ENCODE measurements at regions of chr10 and their contacts with region 1.

Region 1: GRCh38 chr10:45235798-45236231 is 79.6 kb downstream of the OR13A1 start:
- DNase-seq: no peak
- ATAC-seq: no peak
- H3K4me3 ChIP-seq: no peak overlapping the region
- H3K4me3 Mint-ChIP-seq: no peak overlapping the region
- H3K27ac ChIP-seq: no peak overlapping the region
- H3K27ac Mint-ChIP-seq: no peak overlapping the region
- H3K4me1 ChIP-seq: no peaks in the 10 kb centered on the region
- H3K4me1 Mint-ChIP-seq: peaks cover 6% of the 10 kb centered on the region
- H3K27me3 ChIP-seq: no peaks in the 10 kb centered on the region
- H3K27me3 Mint-ChIP-seq: peaks cover 4% of the 10 kb centered on the region
- CTCF ChIP-seq: no peak

Region 2: GRCh38 chr10:43574001-43574892 is 1661.6 kb before region 1 on chr10 and contains the start of gene ZNF239:
- CTCF ChIA-PET with region 1: no interaction called
- POLR2A ChIA-PET with region 1: no interaction called
- intact Hi-C with region 1: no loop called
- DNase-seq: peak; percentile 62 to 93 (median 82)
- ATAC-seq: peak; percentile 88
- H3K4me3 ChIP-seq: peak within 1 kb of the TSS; percentile 43 to 63
- H3K4me3 Mint-ChIP-seq: peak within 1 kb of the TSS; percentile 85
- H3K27ac ChIP-seq: peak within 1 kb of the TSS; percentile 38 to 66
- H3K27ac Mint-ChIP-seq: peak within 1 kb of the TSS; percentile 90
- H3K4me1 ChIP-seq: peaks cover 25% of the 10 kb centered on the region
- H3K4me1 Mint-ChIP-seq: peaks cover 51% of the 10 kb centered on the region
- H3K27me3 ChIP-seq: no peaks in the 10 kb centered on the region
- H3K27me3 Mint-ChIP-seq: no peaks in the 10 kb centered on the region
- CTCF ChIP-seq: no peak
- total RNA-seq, gene ZNF239: 0.75 to 1.1 TPM

Region 3: DNA sequence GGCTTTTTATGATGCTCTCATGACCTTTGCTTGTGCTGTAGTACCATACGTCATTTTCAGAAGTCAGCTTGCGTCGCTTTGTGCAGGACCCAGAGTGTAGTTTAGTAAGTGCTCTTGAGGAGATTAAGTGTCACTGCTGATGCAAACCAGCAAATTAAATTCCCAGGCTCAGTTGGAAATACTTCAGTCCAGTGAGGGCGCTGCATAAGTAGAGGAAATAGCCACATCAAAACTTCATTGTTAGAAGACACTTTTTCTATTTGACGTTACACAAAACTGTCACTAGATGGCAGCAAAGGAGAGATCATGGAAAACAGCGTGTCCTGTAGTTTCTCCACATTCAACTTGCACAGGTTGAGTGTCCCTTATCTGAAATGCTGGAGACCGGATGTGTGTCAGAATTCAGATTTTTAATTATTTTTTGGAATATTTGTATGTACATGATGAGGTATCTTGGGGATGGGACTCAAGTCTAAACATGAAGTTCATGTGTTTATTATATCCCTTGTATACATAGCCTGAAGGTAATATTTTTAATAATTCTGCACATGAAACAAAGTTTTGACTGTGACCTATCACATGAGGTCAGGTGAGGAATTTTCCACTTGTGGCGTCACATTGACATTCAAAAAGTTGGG is 227.2 kb before region 1 on chr10:
- CTCF ChIA-PET with region 1: interaction called, 6 read pairs
- POLR2A ChIA-PET with region 1: no interaction called
- intact Hi-C with region 1: loop called (anchors 2 kb)
- DNase-seq: peak in 4 of 9 experiments; percentile 9 to 81 (median 45)
- ATAC-seq: peak; percentile 88
- H3K4me3 ChIP-seq: no peak overlapping the region
- H3K4me3 Mint-ChIP-seq: no peak overlapping the region
- H3K27ac ChIP-seq: no peak overlapping the region
- H3K27ac Mint-ChIP-seq: no peak overlapping the region
- H3K4me1 ChIP-seq: no peaks in the 10 kb centered on the region
- H3K4me1 Mint-ChIP-seq: peaks cover 4% of the 10 kb centered on the region
- H3K27me3 ChIP-seq: no peaks in the 10 kb centered on the region
- H3K27me3 Mint-ChIP-seq: no peaks in the 10 kb centered on the region
- CTCF ChIP-seq: peak; percentile 84

Region 4: DNA sequence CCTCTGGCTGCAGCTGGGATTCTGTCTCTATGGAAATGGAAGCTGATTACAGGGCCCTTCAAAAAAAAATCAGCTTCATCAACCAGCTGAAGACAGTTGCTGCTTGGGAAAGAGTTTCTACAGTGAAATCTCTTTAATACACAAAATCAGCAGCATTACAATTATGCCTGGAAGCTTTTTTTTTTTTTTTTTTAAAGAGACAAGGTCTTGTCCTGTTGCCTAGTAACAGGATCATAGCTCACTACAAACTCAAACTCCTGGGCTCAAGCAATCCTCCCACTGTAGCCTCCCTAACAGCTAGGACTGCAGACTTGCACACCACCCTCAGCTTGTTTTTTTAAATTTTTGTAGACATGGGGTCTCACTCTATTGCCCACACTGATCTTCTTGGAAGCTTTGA is 14.9 kb before region 1 on chr10:
- CTCF ChIA-PET with region 1: interaction called, 14 read pairs
- POLR2A ChIA-PET with region 1: no interaction called
- intact Hi-C with region 1: no loop called
- DNase-seq: no peak
- ATAC-seq: no peak
- H3K4me3 ChIP-seq: no peak overlapping the region
- H3K4me3 Mint-ChIP-seq: no peak overlapping the region
- H3K27ac ChIP-seq: no peak overlapping the region
- H3K27ac Mint-ChIP-seq: no peak overlapping the region
- H3K4me1 ChIP-seq: no peaks in the 10 kb centered on the region
- H3K4me1 Mint-ChIP-seq: no peaks in the 10 kb centered on the region
- H3K27me3 ChIP-seq: no peaks in the 10 kb centered on the region
- H3K27me3 Mint-ChIP-seq: no peaks in the 10 kb centered on the region
- CTCF ChIP-seq: no peak

Region 5: GRCh38 chr10:45249978-45250693 is 14.3 kb after region 1 on chr10:
- CTCF ChIA-PET with region 1: interaction called, 29 read pairs
- POLR2A ChIA-PET with region 1: interaction called, 4 read pairs
- intact Hi-C with region 1: loop called in 1 of 2 experiments (anchors 2 kb)
- DNase-seq: peak in 2 of 9 experiments; percentile 48 to 68
- ATAC-seq: peak; percentile 36
- H3K4me3 ChIP-seq: no peak overlapping the region
- H3K4me3 Mint-ChIP-seq: no peak overlapping the region
- H3K27ac ChIP-seq: no peak overlapping the region
- H3K27ac Mint-ChIP-seq: no peak overlapping the region
- H3K4me1 ChIP-seq: peaks cover 4% of the 10 kb centered on the region
- H3K4me1 Mint-ChIP-seq: peaks cover 4% of the 10 kb centered on the region
- H3K27me3 ChIP-seq: no peaks in the 10 kb centered on the region
- H3K27me3 Mint-ChIP-seq: peaks cover 4% of the 10 kb centered on the region
- CTCF ChIP-seq: peak; percentile 64

Region 6: GRCh38 chr10:45672181-45673073 is 436.6 kb after region 1 on chr10 and contains the start of gene ZFAND4:
- CTCF ChIA-PET with region 1: no interaction called
- POLR2A ChIA-PET with region 1: no interaction called
- intact Hi-C with region 1: loop called in 1 of 2 experiments (anchors 5 kb)
- DNase-seq: peak; percentile 88 to 98 (median 93)
- ATAC-seq: peak; percentile 97
- H3K4me3 ChIP-seq: peak within 1 kb of the TSS; percentile 82 to 88
- H3K4me3 Mint-ChIP-seq: peak within 1 kb of the TSS; percentile 90
- H3K27ac ChIP-seq: peak within 1 kb of the TSS; percentile 69 to 86
- H3K27ac Mint-ChIP-seq: peak within 1 kb of the TSS; percentile 90
- H3K4me1 ChIP-seq: peaks cover 5% of the 10 kb centered on the region
- H3K4me1 Mint-ChIP-seq: peaks cover 45% of the 10 kb centered on the region
- H3K27me3 ChIP-seq: no peaks in the 10 kb centered on the region
- H3K27me3 Mint-ChIP-seq: no peaks in the 10 kb centered on the region
- CTCF ChIP-seq: peak; percentile 20
- total RNA-seq, gene ZFAND4: 34.7 to 36.6 TPM

Region 7: GRCh38 chr10:46022978-46023702 is 787.3 kb after region 1 on chr10:
- CTCF ChIA-PET with region 1: no interaction called
- POLR2A ChIA-PET with region 1: no interaction called
- intact Hi-C with region 1: loop called (anchors 10 kb)
- DNase-seq: peak; percentile 51 to 90 (median 81)
- ATAC-seq: peak; percentile 97
- H3K4me3 ChIP-seq: peak overlapping the region; percentile 64 to 70
- H3K4me3 Mint-ChIP-seq: peak overlapping the region; percentile 85
- H3K27ac ChIP-seq: peak overlapping the region; percentile 31 to 34
- H3K27ac Mint-ChIP-seq: peak overlapping the region; percentile 89
- H3K4me1 ChIP-seq: peaks cover 78% of the 10 kb centered on the region
- H3K4me1 Mint-ChIP-seq: peaks cover 88% of the 10 kb centered on the region
- H3K27me3 ChIP-seq: no peaks in the 10 kb centered on the region
- H3K27me3 Mint-ChIP-seq: no peaks in the 10 kb centered on the region
- CTCF ChIP-seq: no peak